CD8-positive, alpha-beta memory T cell (primary cell): ENCODE measurements at regions of chr10 and their contacts with region 1.

Region 1: DNA sequence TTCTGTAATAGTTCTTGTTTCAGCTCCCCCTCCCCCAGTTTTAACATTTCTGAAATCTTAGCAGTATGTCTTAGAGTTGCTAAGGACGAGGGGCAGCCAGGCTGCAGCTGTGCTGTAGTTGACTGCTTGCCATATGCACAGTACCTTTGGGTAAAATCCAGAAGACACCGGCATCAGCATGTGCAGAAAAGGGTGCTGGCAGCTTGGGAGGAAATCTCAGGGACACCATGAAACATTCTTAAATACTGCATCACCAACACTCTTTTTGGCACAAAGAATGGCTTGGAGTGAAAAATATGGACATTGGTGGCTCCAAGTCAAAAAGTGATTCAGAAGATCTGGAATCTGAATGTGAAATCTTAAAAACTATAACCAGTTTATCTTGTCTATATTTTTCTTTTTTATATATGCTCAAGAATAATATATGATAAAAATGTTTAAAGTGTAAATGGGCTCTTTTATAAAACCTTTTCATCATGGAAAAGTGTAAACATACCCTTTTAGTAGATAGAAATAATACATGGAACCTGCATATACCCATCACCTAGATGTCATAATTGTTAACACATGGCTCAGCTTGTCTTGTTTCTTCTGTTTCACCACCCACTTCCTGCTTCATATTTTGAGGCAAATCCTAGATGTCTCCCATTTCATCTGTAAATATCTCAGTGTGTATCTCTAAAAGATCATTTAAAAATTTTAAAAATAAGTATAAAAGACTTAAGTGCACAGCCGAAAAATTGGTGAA is 34.4 kb upstream of the ARMS2 start:
- DNase-seq: no peak
- H3K4me3 ChIP-seq: peak overlapping the region; percentile 26
- H3K4me3 Mint-ChIP-seq: peak overlapping the region in 3 of 7 donors; percentile 19 to 48 (median 29)
- H3K27ac ChIP-seq: no peak overlapping the region
- H3K27ac Mint-ChIP-seq: peak overlapping the region; percentile 38 to 99 (median 90)
- H3K4me1 ChIP-seq: peaks cover 92% of the 10 kb centered on the region
- H3K4me1 Mint-ChIP-seq: peaks cover 87 to 97% (median 96%) of the 10 kb centered on the region in 3 donors
- H3K27me3 ChIP-seq: no peaks in the 10 kb centered on the region
- H3K27me3 Mint-ChIP-seq: no peaks in the 10 kb centered on the region

Region 2: GRCh38 chr10:121974535-121975294 is 445.3 kb before region 1 on chr10 and contains the start of gene NSMCE4A:
- CTCF ChIA-PET with region 1: no interaction called
- POLR2A ChIA-PET with region 1: no interaction called
- DNase-seq: peak; percentile 47 to 74 (median 62)
- H3K4me3 ChIP-seq: peak within 1 kb of the TSS; percentile 75
- H3K4me3 Mint-ChIP-seq: peak within 1 kb of the TSS; percentile 80 to 91 (median 83)
- H3K27ac ChIP-seq: peak within 1 kb of the TSS; percentile 84
- H3K27ac Mint-ChIP-seq: peak within 1 kb of the TSS in 6 of 8 donors; percentile 7 to 67 (median 50)
- H3K4me1 ChIP-seq: peaks cover 11% of the 10 kb centered on the region
- H3K4me1 Mint-ChIP-seq: peaks cover 22 to 43% (median 25%) of the 10 kb centered on the region in 3 donors
- H3K27me3 ChIP-seq: no peaks in the 10 kb centered on the region
- H3K27me3 Mint-ChIP-seq: no peaks in the 10 kb centered on the region
- total RNA-seq, gene NSMCE4A: 67.8 to 70.9 TPM

Region 3: DNA sequence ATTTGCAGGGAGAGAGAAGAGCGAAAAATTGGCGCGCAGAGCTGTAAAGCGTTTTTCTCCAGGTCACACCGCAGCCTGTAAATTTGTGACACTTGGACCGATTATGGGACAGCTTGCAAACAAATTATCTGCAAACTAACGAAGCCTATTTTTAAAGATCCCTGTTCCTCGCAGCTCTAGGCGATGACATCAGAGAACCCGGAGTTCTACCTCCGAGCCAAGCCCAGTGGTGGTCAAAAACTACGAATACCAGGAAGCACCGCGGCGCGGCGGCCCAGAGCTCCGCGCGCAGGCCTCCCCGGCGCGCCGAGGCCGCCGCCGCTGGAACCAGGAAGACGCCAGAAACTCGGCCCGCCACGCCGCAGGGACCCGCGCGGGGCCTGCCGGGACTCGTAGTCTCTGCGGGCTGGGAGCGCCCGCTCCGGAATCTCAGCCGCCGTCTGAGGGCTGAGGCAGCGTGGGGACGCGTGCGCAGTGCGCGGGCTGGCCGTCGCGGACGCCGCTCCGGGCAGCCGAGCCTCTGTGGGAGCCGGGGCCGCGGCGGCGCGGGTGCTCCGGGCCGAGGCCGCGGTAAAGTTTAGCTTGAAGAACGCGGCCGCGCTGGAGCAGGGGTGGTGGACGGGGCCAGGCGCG is 45.7 kb before region 1 on chr10 and contains the start of gene PLEKHA1:
- CTCF ChIA-PET with region 1: interaction called, 3 read pairs
- POLR2A ChIA-PET with region 1: interaction called, 12 read pairs
- DNase-seq: peak; percentile 87 to 94 (median 92)
- H3K4me3 ChIP-seq: peak within 1 kb of the TSS; percentile 77
- H3K4me3 Mint-ChIP-seq: peak within 1 kb of the TSS; percentile 90 to 98 (median 96)
- H3K27ac ChIP-seq: peak within 1 kb of the TSS; percentile 77
- H3K27ac Mint-ChIP-seq: peak within 1 kb of the TSS; percentile 91 to 99 (median 98)
- H3K4me1 ChIP-seq: peaks cover 34% of the 10 kb centered on the region
- H3K4me1 Mint-ChIP-seq: peaks cover 40 to 48% (median 46%) of the 10 kb centered on the region in 3 donors
- H3K27me3 ChIP-seq: no peaks in the 10 kb centered on the region
- H3K27me3 Mint-ChIP-seq: peaks cover 5 to 18% of the 10 kb centered on the region in 2 donors
- total RNA-seq, gene PLEKHA1: 14.5 to 16.8 TPM

Region 4: GRCh38 chr10:122453806-122454460 is 33.9 kb after region 1 on chr10:
- CTCF ChIA-PET with region 1: no interaction called
- POLR2A ChIA-PET with region 1: no interaction called
- DNase-seq: no peak
- H3K4me3 ChIP-seq: no peak overlapping the region
- H3K4me3 Mint-ChIP-seq: no peak overlapping the region
- H3K27ac ChIP-seq: no peak overlapping the region
- H3K27ac Mint-ChIP-seq: no peak overlapping the region
- H3K4me1 ChIP-seq: no peaks in the 10 kb centered on the region
- H3K4me1 Mint-ChIP-seq: no peaks in the 10 kb centered on the region
- H3K27me3 ChIP-seq: peaks cover 14% of the 10 kb centered on the region
- H3K27me3 Mint-ChIP-seq: peaks cover 47 to 67% of the 10 kb centered on the region in 2 donors